ENCODE measurements at regions of chr2 and their contacts with region 1.

Region 1: DNA sequence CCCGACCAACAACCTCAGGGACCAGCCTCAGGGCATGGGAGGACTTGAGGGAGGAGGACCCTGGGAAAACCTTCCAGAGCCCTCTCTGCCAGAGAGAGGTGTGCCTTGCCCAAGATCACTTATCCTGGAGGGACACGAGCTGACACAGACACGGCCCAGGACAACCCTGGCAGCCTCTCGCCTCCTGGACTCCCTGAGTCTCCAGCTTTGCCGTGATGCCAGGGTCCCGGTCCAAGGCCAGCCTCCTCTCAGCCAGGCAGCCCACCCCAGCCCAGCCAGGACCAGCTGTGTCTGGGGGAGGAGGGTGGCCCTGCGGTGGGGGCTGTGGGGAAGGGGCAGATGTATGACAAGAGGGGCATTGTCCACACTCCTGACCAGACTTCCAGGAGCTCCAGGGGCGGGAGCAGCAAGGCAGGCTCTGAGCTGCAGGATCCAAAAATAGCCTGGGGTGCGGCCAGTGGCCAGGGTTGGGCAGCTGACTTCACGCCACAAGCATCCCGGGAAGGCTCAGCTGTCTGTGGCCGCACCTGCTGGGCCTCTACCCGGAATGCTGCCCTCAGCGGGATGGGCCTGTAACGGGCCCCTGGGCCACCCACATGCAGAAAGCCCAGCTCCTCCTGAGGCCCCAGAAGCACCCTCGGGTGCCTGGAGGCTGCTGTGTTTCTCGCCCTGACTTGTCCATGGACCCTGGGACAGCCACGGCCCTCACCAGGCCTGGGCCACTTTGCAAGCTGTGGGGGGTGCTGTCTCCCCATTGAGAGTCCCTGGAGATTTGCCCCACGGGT is 65.5 kb upstream of the GPC1 start:
- DNase-seq: peak in 1 of 2 donors; percentile 21
- H3K4me3 ChIP-seq: no peak overlapping the region
- H3K27ac ChIP-seq: peak overlapping the region in 1 of 2 donors; percentile 25
- H3K4me1 ChIP-seq: peaks cover 0 to 2% of the 10 kb centered on the region in 2 donors
- H3K27me3 ChIP-seq: no peaks in the 10 kb centered on the region
- CTCF ChIP-seq: no peak
- POLR2A ChIP-seq: no peak

Region 2: DNA sequence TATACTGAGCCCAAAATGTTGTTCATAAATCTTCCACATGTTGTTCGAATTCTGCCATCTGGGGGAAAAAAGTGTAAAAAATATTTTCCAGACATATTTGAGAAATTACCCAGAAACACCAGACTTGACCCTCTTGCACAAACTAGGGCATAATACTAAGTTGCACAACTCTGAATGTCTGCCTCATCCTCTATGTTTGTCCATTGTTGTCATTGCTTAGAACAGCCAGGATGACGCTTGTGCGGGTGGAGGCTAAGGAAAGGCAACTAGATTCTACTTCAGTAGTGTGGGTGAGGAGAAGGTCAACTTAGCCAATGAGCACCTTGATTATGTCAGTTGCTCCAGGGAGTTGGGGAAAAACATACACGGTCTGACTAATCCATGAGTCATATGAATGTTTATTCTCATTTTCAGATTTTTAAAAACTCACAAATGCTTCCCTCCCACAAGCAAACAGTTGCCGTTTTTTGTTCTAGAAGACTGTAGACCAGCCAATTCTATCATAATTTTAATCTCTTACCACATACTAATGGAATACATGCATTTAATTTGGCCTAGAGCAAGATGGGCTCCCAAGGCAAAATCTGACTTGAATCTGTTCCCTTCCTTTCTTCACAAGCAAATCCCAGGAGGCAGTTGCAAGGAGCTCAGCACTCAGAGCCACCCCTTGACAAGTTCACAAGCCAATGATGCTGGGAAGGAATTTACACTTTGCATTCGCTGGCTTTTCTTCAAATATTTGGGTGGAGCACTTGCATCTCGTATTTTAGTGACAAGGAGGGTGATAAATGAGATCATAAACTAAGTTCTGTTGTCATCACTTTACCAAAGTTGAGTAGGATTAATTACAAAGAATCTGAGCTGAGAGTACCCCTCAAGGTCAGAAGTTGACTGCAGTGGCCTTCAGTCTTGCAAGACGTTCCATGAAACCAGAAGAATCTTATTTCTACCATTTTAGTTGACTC is 1685.3 kb before region 1 on chr2:
- intact Hi-C with region 1: loop called (anchors 5 kb)
- DNase-seq: peak in 1 of 2 donors; percentile 76
- H3K4me3 ChIP-seq: no peak overlapping the region
- H3K27ac ChIP-seq: peak overlapping the region; percentile 81 to 84
- H3K4me1 ChIP-seq: no peaks in the 10 kb centered on the region
- H3K27me3 ChIP-seq: no peaks in the 10 kb centered on the region
- CTCF ChIP-seq: no peak
- POLR2A ChIP-seq: no peak

Region 3: DNA sequence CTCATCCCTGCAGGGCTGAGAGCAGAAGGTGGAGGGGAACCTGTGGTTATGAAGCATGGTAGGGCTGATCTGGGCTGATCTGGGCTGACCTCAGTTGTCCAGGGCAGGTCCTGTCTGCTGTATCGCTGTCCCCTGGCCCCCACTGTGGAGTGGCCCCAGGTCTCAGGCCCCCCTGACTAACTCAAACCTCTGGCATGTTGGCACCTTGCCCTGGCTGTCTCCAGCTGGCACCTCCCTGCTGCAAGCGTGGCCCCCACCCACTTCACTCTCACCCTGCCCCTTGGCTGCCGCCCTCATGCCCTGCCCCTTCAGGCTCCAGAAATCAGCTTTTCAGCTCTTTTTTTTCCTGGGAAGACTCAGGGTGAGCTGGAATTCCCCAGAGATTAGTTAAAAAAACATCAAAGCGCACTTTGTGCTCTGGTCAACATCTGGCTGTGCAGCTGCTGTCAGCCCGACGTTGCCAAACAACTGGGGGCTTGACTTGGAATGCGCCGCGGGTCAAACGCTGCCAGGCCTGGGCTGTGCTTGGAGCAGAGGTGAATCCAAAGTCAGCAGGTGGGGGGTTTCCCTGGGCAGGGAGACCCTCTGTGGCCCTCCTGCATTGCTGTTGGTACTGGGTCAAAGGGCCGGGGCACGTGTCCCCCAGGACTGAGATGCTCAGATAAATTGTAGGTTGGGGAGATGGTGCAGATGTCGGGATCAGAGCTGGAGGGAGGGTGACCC is 795.4 kb before region 1 on chr2:
- intact Hi-C with region 1: no loop called
- DNase-seq: no peak
- H3K4me3 ChIP-seq: no peak overlapping the region
- H3K27ac ChIP-seq: no peak overlapping the region
- H3K4me1 ChIP-seq: no peaks in the 10 kb centered on the region
- H3K27me3 ChIP-seq: peaks cover 0 to 15% of the 10 kb centered on the region in 2 donors
- CTCF ChIP-seq: no peak
- POLR2A ChIP-seq: no peak

Region 4: DNA sequence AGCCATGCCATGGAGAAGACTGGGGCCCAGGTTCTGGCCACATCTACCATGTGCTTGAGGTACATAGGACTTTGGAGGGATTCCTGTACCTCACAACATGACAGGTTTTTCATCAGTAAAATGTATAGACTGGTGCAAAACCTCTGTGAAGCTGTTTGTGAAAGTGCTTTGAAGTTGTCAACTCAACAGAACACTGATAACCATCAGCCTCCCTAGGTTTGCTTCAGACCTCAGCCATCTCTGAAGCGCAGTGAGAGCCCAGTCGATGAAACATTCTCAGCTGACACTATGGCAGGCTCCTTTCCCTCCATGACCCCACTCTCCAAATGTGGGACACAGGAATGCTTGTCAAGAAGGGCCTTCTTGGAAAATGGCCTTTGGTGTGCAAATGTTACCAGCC is 1099.8 kb after region 1 on chr2:
- intact Hi-C with region 1: no loop called
- DNase-seq: no peak
- H3K4me3 ChIP-seq: no peak overlapping the region
- H3K27ac ChIP-seq: no peak overlapping the region
- H3K4me1 ChIP-seq: no peaks in the 10 kb centered on the region
- H3K27me3 ChIP-seq: no peaks in the 10 kb centered on the region
- CTCF ChIP-seq: no peak
- POLR2A ChIP-seq: no peak